CD4-positive, alpha-beta T cell (primary cell): ENCODE measurements at regions of chr1 and their contacts with region 1.

Region 1: DNA sequence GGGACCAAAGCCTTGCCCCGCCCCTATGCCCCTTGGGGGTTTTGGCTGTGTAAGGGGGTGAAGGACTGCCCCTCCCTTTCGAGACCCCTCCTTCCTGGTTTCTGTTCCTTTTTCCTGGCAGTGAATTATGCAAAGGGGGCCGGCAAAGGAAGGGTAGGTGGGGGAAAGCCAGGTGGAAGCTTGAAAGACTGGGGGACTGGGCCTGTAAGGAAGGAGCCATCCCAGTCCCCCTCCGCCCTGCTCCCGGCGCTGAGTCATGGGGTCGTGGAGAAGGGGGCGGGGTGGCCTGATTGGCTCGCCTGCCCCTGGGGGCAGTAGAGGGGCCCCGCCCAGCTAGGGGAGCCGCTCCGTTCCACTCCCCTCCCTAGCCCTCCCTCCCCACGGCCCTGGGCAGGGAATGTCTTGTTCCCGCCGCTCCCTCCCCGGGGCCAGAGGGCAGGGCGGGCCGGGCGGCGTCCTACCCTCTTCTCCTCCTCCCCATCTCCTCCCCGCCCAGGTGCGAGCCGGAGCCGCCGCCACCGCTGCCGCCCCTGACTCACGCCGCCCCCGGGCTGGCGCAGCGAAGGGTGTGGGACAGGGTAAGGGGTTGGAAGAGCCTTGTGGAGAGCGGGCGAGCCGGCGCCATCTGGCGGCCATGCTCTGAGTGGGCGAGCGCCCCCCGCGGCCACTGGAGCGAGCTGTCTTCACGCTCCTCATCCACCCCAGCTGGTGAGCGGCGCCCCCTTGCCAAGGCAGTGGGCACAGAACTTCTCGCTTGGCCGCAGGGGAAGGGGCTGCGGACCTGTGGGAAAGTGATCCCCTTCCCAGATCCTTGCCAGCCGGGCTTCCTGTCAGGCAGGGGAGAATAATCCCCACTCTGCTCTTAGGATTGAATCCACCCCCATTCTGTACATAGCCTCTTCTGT is 14.7 kb downstream of the ZBTB7B start:
- DNase-seq: peak; percentile 84 to 95 (median 88)
- ATAC-seq: peak; percentile 86
- H3K4me3 ChIP-seq: peak overlapping the region; percentile 45
- H3K4me3 Mint-ChIP-seq: peak overlapping the region; percentile 67
- H3K27ac ChIP-seq: peak overlapping the region; percentile 73 to 77
- H3K27ac Mint-ChIP-seq: peak overlapping the region; percentile 92
- H3K4me1 ChIP-seq: peaks cover 76% of the 10 kb centered on the region
- H3K4me1 Mint-ChIP-seq: peaks cover 76% of the 10 kb centered on the region
- H3K27me3 ChIP-seq: no peaks in the 10 kb centered on the region
- H3K27me3 Mint-ChIP-seq: no peaks in the 10 kb centered on the region
- CTCF ChIP-seq: peak; percentile 100

Region 2: GRCh38 chr1:154669464-154670282 is 347.6 kb before region 1 on chr1:
- CTCF ChIA-PET with region 1: interaction called, 7 read pairs
- POLR2A ChIA-PET with region 1: no interaction called
- intact Hi-C with region 1: loop called (anchors 5 to 10 kb)
- DNase-seq: peak; percentile 61 to 88 (median 70)
- ATAC-seq: peak; percentile 100
- H3K4me3 ChIP-seq: no peak overlapping the region
- H3K4me3 Mint-ChIP-seq: no peak overlapping the region
- H3K27ac ChIP-seq: no peak overlapping the region
- H3K27ac Mint-ChIP-seq: no peak overlapping the region
- H3K4me1 ChIP-seq: no peaks in the 10 kb centered on the region
- H3K4me1 Mint-ChIP-seq: peaks cover 5% of the 10 kb centered on the region
- H3K27me3 ChIP-seq: no peaks in the 10 kb centered on the region
- H3K27me3 Mint-ChIP-seq: no peaks in the 10 kb centered on the region
- CTCF ChIP-seq: peak; percentile 83

Region 3: DNA sequence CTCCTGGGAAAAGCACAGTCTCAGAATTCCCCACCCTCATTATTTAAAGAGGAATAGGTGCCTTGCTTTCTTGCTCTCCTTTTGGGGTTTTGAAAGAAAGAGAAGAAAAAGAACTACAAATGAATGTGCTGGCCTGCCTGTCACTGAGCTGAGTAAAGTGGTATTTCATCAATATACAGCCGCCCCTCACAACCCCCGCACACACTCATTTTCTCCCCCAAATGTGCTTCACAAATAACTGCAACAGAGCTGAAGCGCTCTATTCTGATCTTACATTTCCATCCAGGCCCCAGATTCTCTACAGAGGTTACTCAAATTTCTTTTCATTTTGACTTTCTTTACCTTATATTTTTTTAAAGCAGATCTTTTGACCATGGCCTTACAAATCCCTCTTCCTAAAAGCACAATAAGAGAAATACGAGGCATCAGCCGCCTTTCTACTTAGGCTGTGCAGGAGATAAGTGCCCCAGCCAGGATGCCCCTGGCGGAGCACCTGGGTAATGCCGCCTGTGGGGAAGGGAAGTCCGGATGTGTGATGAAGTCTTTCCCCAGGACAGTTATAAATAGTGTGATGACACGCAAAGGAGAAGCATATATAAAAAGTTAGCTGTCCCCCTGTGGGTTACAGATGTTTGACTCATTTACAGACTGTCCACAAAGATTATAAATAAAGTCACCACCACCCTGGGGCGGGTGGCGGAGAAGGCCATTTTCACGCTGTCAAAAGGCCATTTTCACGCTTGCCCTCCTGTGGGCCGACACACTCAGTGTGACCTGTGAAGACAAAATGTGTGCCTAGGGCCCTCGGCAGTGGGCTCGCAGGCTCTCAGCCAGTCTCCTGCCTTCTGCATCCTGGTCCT is 153.7 kb before region 1 on chr1:
- CTCF ChIA-PET with region 1: no interaction called
- POLR2A ChIA-PET with region 1: no interaction called
- intact Hi-C with region 1: no loop called
- DNase-seq: peak in 8 of 14 experiments; percentile 6 to 53 (median 21)
- ATAC-seq: peak; percentile 52
- H3K4me3 ChIP-seq: no peak overlapping the region
- H3K4me3 Mint-ChIP-seq: no peak overlapping the region
- H3K27ac ChIP-seq: no peak overlapping the region
- H3K27ac Mint-ChIP-seq: no peak overlapping the region
- H3K4me1 ChIP-seq: no peaks in the 10 kb centered on the region
- H3K4me1 Mint-ChIP-seq: peaks cover 3% of the 10 kb centered on the region
- H3K27me3 ChIP-seq: peaks cover 16 to 18% of the 10 kb centered on the region in 2 experiments
- H3K27me3 Mint-ChIP-seq: peaks cover 16% of the 10 kb centered on the region
- CTCF ChIP-seq: peak; percentile 43

Region 4: GRCh38 chr1:154955718-154956543 is 61.4 kb before region 1 on chr1 and contains the start of gene PBXIP1:
- CTCF ChIA-PET with region 1: interaction called, 62 read pairs
- POLR2A ChIA-PET with region 1: interaction called, 72 read pairs
- intact Hi-C with region 1: loop called in 1 of 2 experiments (anchors 2 kb)
- DNase-seq: peak; percentile 64 to 95 (median 78)
- ATAC-seq: peak; percentile 40
- H3K4me3 ChIP-seq: peak within 1 kb of the TSS; percentile 69
- H3K4me3 Mint-ChIP-seq: peak within 1 kb of the TSS; percentile 95
- H3K27ac ChIP-seq: peak within 1 kb of the TSS; percentile 100
- H3K27ac Mint-ChIP-seq: peak within 1 kb of the TSS; percentile 96
- H3K4me1 ChIP-seq: peaks cover 96% of the 10 kb centered on the region
- H3K4me1 Mint-ChIP-seq: peaks cover 57% of the 10 kb centered on the region
- H3K27me3 ChIP-seq: no peaks in the 10 kb centered on the region
- H3K27me3 Mint-ChIP-seq: no peaks in the 10 kb centered on the region
- CTCF ChIP-seq: peak; percentile 40
- total RNA-seq, gene PBXIP1: 434 to 440 TPM

Region 5: GRCh38 chr1:154974063-154974807 is 43.1 kb before region 1 on chr1 and contains the start of gene CKS1B:
- CTCF ChIA-PET with region 1: interaction called, 71 read pairs
- POLR2A ChIA-PET with region 1: interaction called, 46 read pairs
- intact Hi-C with region 1: loop called (anchors 1 to 2 kb)
- DNase-seq: peak; percentile 93 to 100 (median 96)
- ATAC-seq: peak; percentile 87
- H3K4me3 ChIP-seq: peak within 1 kb of the TSS; percentile 81
- H3K4me3 Mint-ChIP-seq: no peak within 1 kb of the TSS
- H3K27ac ChIP-seq: peak within 1 kb of the TSS; percentile 94 to 99
- H3K27ac Mint-ChIP-seq: no peak within 1 kb of the TSS
- H3K4me1 ChIP-seq: peaks cover 49% of the 10 kb centered on the region
- H3K4me1 Mint-ChIP-seq: peaks cover 26% of the 10 kb centered on the region
- H3K27me3 ChIP-seq: no peaks in the 10 kb centered on the region
- H3K27me3 Mint-ChIP-seq: no peaks in the 10 kb centered on the region
- CTCF ChIP-seq: no peak
- total RNA-seq, gene CKS1B: 1.4 to 3.9 TPM

Region 6: GRCh38 chr1:154992721-154993571 is 24.3 kb before region 1 on chr1:
- CTCF ChIA-PET with region 1: interaction called, 159 read pairs
- POLR2A ChIA-PET with region 1: interaction called, 189 read pairs
- intact Hi-C with region 1: no loop called
- DNase-seq: no peak
- ATAC-seq: no peak
- H3K4me3 ChIP-seq: no peak overlapping the region
- H3K4me3 Mint-ChIP-seq: no peak overlapping the region
- H3K27ac ChIP-seq: no peak overlapping the region
- H3K27ac Mint-ChIP-seq: no peak overlapping the region
- H3K4me1 ChIP-seq: peaks cover 33% of the 10 kb centered on the region
- H3K4me1 Mint-ChIP-seq: peaks cover 33% of the 10 kb centered on the region
- H3K27me3 ChIP-seq: no peaks in the 10 kb centered on the region
- H3K27me3 Mint-ChIP-seq: no peaks in the 10 kb centered on the region
- CTCF ChIP-seq: no peak

Region 7: DNA sequence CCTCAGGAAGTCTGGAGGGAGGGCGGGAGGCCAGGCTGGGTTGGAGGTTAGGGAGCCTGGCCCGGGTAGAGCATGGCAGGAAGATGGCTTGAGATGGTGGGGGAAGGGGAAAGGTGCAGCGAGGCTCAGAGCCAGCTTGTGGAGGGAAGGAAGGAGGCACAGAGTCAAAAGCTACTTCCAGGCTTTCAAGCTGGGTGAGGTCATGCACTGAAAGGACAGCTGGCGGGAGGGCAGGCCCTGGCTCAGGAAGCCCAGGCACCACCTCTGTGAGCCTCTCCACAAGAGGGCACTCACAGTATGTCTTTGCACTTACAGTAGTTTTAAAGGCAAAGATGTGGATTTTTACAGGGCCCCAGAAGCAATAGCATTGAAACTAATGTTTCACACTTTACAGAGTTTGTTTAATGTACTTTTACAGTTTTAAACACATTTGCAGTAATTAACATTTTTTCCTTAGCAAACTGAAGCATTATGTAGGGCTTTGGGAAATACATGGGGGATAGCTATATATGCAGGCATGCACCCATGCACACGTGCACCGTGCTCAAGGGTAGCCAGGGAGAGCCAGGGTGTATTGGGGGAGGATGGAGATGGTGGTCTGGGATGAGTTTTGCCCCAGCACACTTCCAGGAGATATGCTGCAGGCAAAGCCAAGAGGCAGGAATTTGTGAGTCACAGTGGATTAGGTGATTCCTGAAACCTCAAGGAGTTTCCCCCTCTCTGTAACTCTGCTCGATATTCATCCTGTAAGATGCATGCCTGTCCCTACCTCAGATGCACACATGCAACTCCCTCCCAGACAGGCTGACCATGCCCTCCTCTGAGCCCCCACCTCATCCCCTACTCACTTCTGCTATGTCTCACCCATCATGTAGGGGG is 27.8 kb after region 1 on chr1:
- CTCF ChIA-PET with region 1: interaction called, 15 read pairs
- POLR2A ChIA-PET with region 1: no interaction called
- intact Hi-C with region 1: no loop called
- DNase-seq: peak; percentile 42 to 85 (median 52)
- ATAC-seq: peak; percentile 93
- H3K4me3 ChIP-seq: no peak overlapping the region
- H3K4me3 Mint-ChIP-seq: no peak overlapping the region
- H3K27ac ChIP-seq: no peak overlapping the region
- H3K27ac Mint-ChIP-seq: no peak overlapping the region
- H3K4me1 ChIP-seq: peaks cover 7% of the 10 kb centered on the region
- H3K4me1 Mint-ChIP-seq: peaks cover 9% of the 10 kb centered on the region
- H3K27me3 ChIP-seq: no peaks in the 10 kb centered on the region
- H3K27me3 Mint-ChIP-seq: no peaks in the 10 kb centered on the region
- CTCF ChIP-seq: peak; percentile 72

Region 8: GRCh38 chr1:155063550-155064110 is 46.3 kb after region 1 on chr1 and contains the start of gene EFNA4:
- CTCF ChIA-PET with region 1: interaction called, 13 read pairs
- POLR2A ChIA-PET with region 1: interaction called, 3 read pairs
- intact Hi-C with region 1: no loop called
- DNase-seq: peak; percentile 69 to 92 (median 80)
- ATAC-seq: peak; percentile 90
- H3K4me3 ChIP-seq: peak within 1 kb of the TSS; percentile 76
- H3K4me3 Mint-ChIP-seq: peak within 1 kb of the TSS; percentile 96
- H3K27ac ChIP-seq: peak within 1 kb of the TSS in 1 of 2 donors; percentile 61
- H3K27ac Mint-ChIP-seq: peak within 1 kb of the TSS; percentile 70
- H3K4me1 ChIP-seq: peaks cover 41% of the 10 kb centered on the region
- H3K4me1 Mint-ChIP-seq: peaks cover 32% of the 10 kb centered on the region
- H3K27me3 ChIP-seq: no peaks in the 10 kb centered on the region
- H3K27me3 Mint-ChIP-seq: no peaks in the 10 kb centered on the region
- CTCF ChIP-seq: no peak
- total RNA-seq, gene EFNA4: 2.4 to 3.3 TPM

Region 9: DNA sequence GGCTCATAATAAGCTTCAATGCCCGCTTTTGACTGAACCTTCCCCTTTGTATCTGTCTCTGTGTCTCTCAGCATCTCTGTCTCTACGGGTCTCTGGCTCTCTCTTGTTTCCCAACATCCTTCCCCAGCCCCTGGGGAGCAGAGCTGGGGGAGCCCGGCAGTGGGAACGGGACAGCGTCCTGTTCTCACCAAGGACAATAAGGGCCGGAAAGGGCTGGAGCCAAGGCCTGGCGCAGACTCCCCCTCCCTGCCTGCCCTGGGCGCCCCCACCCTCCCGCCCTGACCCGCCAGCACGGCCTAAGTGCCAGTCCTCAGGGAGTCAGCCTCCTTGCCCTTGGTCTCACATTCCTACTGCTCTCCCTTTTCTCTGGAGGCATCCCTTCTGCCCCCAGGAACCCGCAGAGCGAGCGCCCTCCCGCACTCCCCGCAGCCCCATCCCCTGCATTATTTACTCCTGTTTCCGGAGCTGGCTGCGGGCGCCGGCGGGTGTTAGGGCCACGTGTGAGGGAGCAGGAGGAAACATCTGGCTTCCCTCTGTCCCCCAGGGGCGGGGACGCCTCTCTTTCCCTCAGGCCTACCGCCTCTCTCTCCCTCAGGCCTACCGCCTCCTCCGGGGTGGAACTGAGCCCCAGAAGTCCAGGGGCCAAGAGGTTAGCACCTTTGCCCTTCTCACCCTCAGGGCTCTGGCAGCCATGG is 149.3 kb after region 1 on chr1:
- CTCF ChIA-PET with region 1: no interaction called
- POLR2A ChIA-PET with region 1: no interaction called
- intact Hi-C with region 1: no loop called
- DNase-seq: peak in 1 of 14 experiments; percentile 30
- ATAC-seq: no peak
- H3K4me3 ChIP-seq: no peak overlapping the region
- H3K4me3 Mint-ChIP-seq: no peak overlapping the region
- H3K27ac ChIP-seq: no peak overlapping the region
- H3K27ac Mint-ChIP-seq: no peak overlapping the region
- H3K4me1 ChIP-seq: peaks cover 19% of the 10 kb centered on the region
- H3K4me1 Mint-ChIP-seq: peaks cover 18% of the 10 kb centered on the region
- H3K27me3 ChIP-seq: peaks cover 0 to 7% of the 10 kb centered on the region in 2 experiments
- H3K27me3 Mint-ChIP-seq: peaks cover 3% of the 10 kb centered on the region
- CTCF ChIP-seq: no peak